ENCODE measurements at regions of chr2 and their contacts with region 1.

Region 1: DNA sequence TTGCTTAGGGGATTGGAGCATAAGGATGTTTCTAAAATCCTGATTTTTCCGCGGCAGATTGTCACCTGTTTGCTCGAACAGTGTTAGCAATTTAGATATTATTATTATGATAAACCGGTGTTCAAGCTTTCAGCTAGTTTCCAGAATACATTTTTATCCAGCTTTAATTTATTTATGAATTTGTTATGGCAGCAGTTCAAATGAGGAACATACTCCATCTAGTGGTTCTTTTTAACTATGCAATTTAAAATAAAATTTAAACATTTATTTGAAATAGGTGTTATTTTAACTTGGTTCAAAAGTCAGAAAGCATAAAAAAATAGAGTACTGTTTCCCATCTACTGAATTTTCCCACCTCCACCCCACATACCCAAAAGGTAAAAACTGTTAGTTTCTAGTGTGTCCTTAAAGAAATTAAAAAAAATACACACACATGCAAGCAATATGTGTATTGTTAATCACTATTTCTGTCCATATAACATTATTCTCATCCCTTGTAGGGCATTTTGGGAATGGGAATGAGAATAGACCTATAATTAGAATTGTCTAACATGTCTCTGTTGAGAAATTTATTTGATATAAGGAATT is 23.2 kb downstream of the ACOXL start:
- DNase-seq: no peak
- ATAC-seq: no peak
- H3K4me3 Mint-ChIP-seq: no peak overlapping the region
- H3K27ac Mint-ChIP-seq: no peak overlapping the region
- H3K4me1 Mint-ChIP-seq: peaks cover 24% of the 10 kb centered on the region
- H3K27me3 Mint-ChIP-seq: no peaks in the 10 kb centered on the region
- CTCF ChIP-seq: peak; percentile 34; the same call in 1 of the 2 replicates

Region 2: GRCh38 chr2:110664135-110664534 is 91.5 kb before region 1 on chr2:
- CTCF ChIA-PET with region 1: interaction called, 10 read pairs
- POLR2A ChIA-PET with region 1: no interaction called
- DNase-seq: no peak
- ATAC-seq: no peak
- H3K4me3 Mint-ChIP-seq: no peak overlapping the region
- H3K27ac Mint-ChIP-seq: peak overlapping the region; percentile 93
- H3K4me1 Mint-ChIP-seq: peaks cover 6% of the 10 kb centered on the region; the same call in 1 of the 2 replicates
- H3K27me3 Mint-ChIP-seq: no peaks in the 10 kb centered on the region
- CTCF ChIP-seq: no peak

Region 3: GRCh38 chr2:110677530-110678456 is 77.8 kb before region 1 on chr2 and contains the start of gene BUB1:
- CTCF ChIA-PET with region 1: interaction called, 16 read pairs
- POLR2A ChIA-PET with region 1: interaction called, 3 read pairs
- DNase-seq: peak; percentile 98
- ATAC-seq: peak; percentile 94
- H3K4me3 Mint-ChIP-seq: peak within 1 kb of the TSS; percentile 89
- H3K27ac Mint-ChIP-seq: peak within 1 kb of the TSS; percentile 99
- H3K4me1 Mint-ChIP-seq: peaks cover 45% of the 10 kb centered on the region
- H3K27me3 Mint-ChIP-seq: peaks cover 41% of the 10 kb centered on the region
- CTCF ChIP-seq: no peak
- total RNA-seq, gene BUB1: 115 to 118 TPM (median 116 TPM) in 3 replicates

Region 4: DNA sequence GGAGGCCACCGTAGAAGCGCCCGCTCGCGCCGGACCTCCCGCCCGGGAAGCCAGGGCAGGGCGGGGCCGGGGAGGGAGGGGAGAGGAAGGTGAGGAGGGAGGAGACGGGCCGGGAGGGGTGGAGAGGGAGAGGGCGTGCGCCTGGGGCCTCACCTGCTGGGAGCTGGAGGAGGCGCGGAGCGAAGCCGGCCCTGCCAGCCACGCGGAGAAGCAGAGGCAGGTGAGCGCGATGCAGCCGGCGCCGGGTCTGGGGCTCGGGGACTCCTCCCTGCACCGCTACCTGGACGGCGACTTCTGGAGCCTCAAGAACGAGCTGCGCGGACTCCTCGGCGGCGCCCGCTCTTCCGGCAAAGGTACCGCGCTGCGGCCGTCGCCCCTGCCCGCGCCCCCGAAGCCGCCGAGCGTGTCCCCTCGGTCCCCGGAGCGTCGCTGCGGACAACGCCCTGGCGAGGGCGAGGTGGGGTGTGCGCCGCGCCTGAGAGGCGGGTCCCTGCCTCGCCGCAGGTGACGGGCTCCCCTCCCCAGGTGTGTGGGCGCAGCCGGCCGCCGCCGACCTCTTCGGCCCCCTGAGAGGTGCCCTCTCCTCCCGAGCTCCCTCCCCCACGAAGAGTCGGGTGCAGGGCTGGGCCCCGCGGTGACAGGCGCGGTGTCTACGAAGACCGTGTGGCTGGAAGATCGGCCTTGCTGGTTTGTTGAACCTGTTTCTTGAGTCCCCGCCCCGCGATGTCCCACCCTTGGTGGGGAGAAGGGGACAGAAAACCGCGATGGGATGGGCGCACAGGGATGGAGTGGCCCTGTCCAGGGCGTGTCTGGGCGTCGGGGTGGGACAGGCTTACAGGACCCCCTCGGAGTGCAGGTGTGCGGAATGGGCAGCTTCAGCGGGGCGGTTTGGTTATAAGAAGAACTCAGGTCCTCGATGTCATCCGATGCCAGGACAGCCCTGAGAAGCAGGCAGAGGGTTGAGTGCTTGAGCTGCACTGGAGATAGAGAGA is 22.9 kb before region 1 on chr2 and contains the start of gene ACOXL:
- CTCF ChIA-PET with region 1: interaction called, 13 read pairs
- POLR2A ChIA-PET with region 1: no interaction called
- DNase-seq: peak; percentile 91
- ATAC-seq: peak; percentile 78
- H3K4me3 Mint-ChIP-seq: peak within 1 kb of the TSS; percentile 81
- H3K27ac Mint-ChIP-seq: peak within 1 kb of the TSS; percentile 22
- H3K4me1 Mint-ChIP-seq: peaks cover 72% of the 10 kb centered on the region
- H3K27me3 Mint-ChIP-seq: peaks cover 40% of the 10 kb centered on the region
- CTCF ChIP-seq: no peak
- total RNA-seq, gene ACOXL: 14.6 to 15.8 TPM (median 14.9 TPM) in 3 replicates

Region 5: DNA sequence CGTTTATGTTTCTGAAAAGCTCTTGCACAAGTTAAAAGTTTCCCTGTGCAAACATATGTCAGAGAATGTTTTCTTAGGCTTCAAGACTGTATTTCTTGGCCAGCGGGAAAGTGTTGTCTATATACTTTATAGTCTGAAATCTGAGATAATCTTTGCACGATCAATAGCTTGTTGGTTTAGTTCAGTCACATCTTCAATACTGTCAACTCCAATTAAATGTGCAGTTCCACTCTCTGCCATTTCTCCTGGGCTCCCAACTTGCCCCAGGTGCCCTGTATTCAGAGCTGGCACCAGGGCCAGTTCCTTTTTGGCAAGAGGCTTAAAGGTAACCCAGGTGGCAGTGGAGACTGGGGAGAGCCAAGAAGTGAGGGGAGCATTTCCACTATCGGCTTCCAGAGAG is 41.2 kb after region 1 on chr2:
- CTCF ChIA-PET with region 1: no interaction called
- POLR2A ChIA-PET with region 1: no interaction called
- DNase-seq: no peak
- ATAC-seq: no peak
- H3K4me3 Mint-ChIP-seq: no peak overlapping the region
- H3K27ac Mint-ChIP-seq: no peak overlapping the region
- H3K4me1 Mint-ChIP-seq: peaks cover 20% of the 10 kb centered on the region
- H3K27me3 Mint-ChIP-seq: peaks cover 2% of the 10 kb centered on the region; the same call in 1 of the 2 replicates
- CTCF ChIP-seq: no peak

Region 6: DNA sequence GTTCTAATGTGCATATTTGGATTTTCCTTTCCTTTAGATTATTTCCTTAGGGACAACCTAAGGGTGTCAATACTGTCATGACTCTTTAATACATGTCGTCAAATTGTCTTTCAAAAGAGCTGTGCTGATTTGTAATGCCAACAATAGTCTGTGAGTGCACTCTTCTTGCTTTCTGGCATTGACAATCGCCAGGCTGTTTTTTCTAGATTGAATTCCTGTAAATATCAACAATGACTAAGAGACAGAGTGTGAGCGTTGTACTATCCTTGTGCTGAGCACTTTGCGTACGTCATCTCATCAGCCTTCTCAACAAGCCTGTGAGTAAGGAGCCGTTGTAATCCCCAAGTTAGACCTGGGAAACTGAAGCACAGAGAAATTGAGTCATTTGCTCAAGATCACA is 72.7 kb after region 1 on chr2:
- CTCF ChIA-PET with region 1: no interaction called
- POLR2A ChIA-PET with region 1: no interaction called
- DNase-seq: no peak
- ATAC-seq: no peak
- H3K4me3 Mint-ChIP-seq: no peak overlapping the region
- H3K27ac Mint-ChIP-seq: no peak overlapping the region
- H3K4me1 Mint-ChIP-seq: peaks cover 5% of the 10 kb centered on the region
- H3K27me3 Mint-ChIP-seq: peaks cover 2% of the 10 kb centered on the region; the same call in 1 of the 2 replicates
- CTCF ChIP-seq: no peak